ENCODE measurements at regions of chr2 and their contacts with region 1.

Region 1: GRCh38 chr2:11234309-11234708 is 79.0 kb downstream of the SLC66A3 start:
- DNase-seq: no peak
- ATAC-seq: no peak
- H3K4me3 Mint-ChIP-seq: no peak overlapping the region
- H3K27ac Mint-ChIP-seq: no peak overlapping the region
- H3K4me1 Mint-ChIP-seq: peaks cover 5% of the 10 kb centered on the region
- H3K27me3 Mint-ChIP-seq: no peaks in the 10 kb centered on the region
- CTCF ChIP-seq: no peak

Region 2: GRCh38 chr2:11411768-11412448 is 177.6 kb after region 1 on chr2:
- CTCF ChIA-PET with region 1: interaction called, 16 read pairs
- POLR2A ChIA-PET with region 1: no interaction called
- intact Hi-C with region 1: loop called (anchors 1 kb)
- DNase-seq: no peak
- ATAC-seq: no peak
- H3K4me3 Mint-ChIP-seq: no peak overlapping the region
- H3K27ac Mint-ChIP-seq: no peak overlapping the region
- H3K4me1 Mint-ChIP-seq: no peaks in the 10 kb centered on the region
- H3K27me3 Mint-ChIP-seq: peaks cover 9% of the 10 kb centered on the region
- CTCF ChIP-seq: no peak

Region 3: GRCh38 chr2:11446733-11447248 is 212.5 kb after region 1 on chr2:
- CTCF ChIA-PET with region 1: interaction called, 8 read pairs
- POLR2A ChIA-PET with region 1: no interaction called
- intact Hi-C with region 1: loop called (anchors 1 kb)
- DNase-seq: peak; percentile 19
- ATAC-seq: peak; percentile 65
- H3K4me3 Mint-ChIP-seq: no peak overlapping the region
- H3K27ac Mint-ChIP-seq: no peak overlapping the region
- H3K4me1 Mint-ChIP-seq: no peaks in the 10 kb centered on the region
- H3K27me3 Mint-ChIP-seq: no peaks in the 10 kb centered on the region
- CTCF ChIP-seq: peak; percentile 18

Region 4: DNA sequence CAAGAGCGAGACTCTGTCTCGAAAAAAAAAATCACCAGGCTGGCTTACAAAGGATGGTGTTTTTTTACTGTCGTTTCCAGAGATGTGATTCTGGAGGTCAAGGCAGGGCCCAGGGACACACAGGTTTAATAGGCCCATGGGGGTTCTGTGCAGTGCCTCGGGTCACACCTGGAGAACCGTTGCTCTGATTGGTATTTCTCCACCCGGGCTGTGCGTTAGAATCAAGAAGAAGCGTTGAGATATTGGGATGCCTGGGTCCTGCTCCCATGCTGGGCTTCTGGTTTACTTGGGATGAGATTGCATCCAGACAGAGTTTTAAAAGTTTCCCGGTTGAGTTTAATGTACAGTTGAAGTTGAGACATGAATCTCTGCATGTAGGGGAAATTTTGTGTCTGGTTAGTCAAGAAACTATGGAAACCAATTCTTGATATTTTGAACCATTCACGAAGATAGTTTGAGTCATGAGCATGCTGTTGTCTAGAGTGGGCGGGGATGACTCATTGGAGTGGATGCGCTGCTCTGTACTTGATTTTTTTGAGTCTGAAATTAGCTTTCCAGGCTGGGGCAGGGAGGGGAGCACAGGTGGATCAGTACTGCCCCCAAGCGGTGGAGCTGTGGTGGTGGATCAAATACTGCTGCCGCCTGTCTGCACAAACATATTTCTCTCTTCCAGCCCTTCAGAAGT is 349.7 kb after region 1 on chr2:
- CTCF ChIA-PET with region 1: interaction called, 10 read pairs
- POLR2A ChIA-PET with region 1: no interaction called
- intact Hi-C with region 1: no loop called
- DNase-seq: no peak
- ATAC-seq: peak; percentile 89
- H3K4me3 Mint-ChIP-seq: no peak overlapping the region
- H3K27ac Mint-ChIP-seq: no peak overlapping the region
- H3K4me1 Mint-ChIP-seq: no peaks in the 10 kb centered on the region
- H3K27me3 Mint-ChIP-seq: peaks cover 8% of the 10 kb centered on the region
- CTCF ChIP-seq: no peak

Region 5: GRCh38 chr2:11938196-11938595 is 703.9 kb after region 1 on chr2:
- CTCF ChIA-PET with region 1: no interaction called
- POLR2A ChIA-PET with region 1: no interaction called
- intact Hi-C with region 1: no loop called
- DNase-seq: no peak
- ATAC-seq: no peak
- H3K4me3 Mint-ChIP-seq: no peak overlapping the region
- H3K27ac Mint-ChIP-seq: no peak overlapping the region
- H3K4me1 Mint-ChIP-seq: peaks cover 17% of the 10 kb centered on the region
- H3K27me3 Mint-ChIP-seq: no peaks in the 10 kb centered on the region
- CTCF ChIP-seq: no peak